ENCODE measurements at regions of chr10 and their contacts with region 1.

Region 1: DNA sequence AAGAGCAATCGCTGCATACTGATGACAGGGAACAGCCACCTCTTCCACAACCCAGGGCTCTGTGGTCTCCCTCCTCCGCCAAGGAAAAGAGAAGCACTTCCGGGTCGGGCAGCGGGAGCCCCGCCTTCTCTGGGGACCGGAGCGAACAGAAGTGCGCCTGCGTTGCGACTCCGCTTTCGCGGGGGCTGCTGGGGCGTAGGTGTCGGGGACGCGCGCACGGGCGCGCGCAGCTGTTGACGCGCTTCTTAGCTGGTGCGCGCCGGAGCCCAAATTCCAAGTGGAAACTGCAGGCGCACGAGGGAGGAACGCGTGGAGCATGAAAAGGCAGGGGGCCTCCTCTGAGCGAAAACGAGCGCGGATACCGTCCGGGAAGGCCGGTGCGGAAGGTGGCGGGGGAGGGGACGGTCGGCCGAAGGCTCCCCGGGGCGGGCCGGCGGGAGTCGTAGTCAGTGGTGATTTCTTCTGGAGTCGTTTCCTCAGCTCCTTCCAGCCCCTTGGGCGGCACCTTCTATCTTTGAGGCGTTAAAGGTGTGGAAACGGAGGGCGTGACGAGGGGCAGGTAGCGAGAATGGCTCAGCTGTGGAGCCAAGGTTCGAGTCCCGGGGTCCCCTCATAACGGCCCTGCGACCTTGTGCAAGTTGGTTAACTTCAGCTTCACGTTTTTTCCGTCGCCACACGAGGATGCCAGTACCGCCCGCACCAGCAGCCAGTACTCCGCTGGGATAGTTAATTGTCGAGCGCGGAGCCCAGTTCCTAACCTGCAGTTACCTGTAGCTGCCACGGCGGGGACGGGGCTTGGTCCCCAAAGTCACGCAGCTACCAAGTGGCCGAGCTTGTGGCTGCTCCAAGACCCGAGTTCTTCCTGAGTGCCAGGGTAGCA is at the starts of genes COX15 and CUTC:
- DNase-seq: peak; percentile 94 to 95 (median 95)
- H3K4me3 ChIP-seq: peak within 1 kb of the TSS; percentile 82 to 98
- H3K4me3 Mint-ChIP-seq: peak within 1 kb of the TSS; percentile 97 to 100 (median 100)
- H3K27ac ChIP-seq: peak within 1 kb of the TSS; percentile 91
- H3K27ac Mint-ChIP-seq: peak within 1 kb of the TSS; percentile 97 to 100 (median 99)
- H3K4me1 ChIP-seq: peaks cover 44% of the 10 kb centered on the region
- H3K4me1 Mint-ChIP-seq: peaks cover 22 to 56% (median 39%) of the 10 kb centered on the region in 4 donors
- H3K27me3 ChIP-seq: no peaks in the 10 kb centered on the region
- H3K27me3 Mint-ChIP-seq: no peaks in the 10 kb centered on the region
- total RNA-seq, gene COX15: 31.1 to 32.1 TPM
- total RNA-seq, gene CUTC: 29.8 to 35.8 TPM

Region 2: GRCh38 chr10:98134431-98135221 is 1597.6 kb before region 1 on chr10 and contains the start of gene R3HCC1L:
- CTCF ChIA-PET with region 1: no interaction called
- POLR2A ChIA-PET with region 1: no interaction called
- intact Hi-C with region 1: loop called (anchors 1 kb)
- DNase-seq: peak; percentile 89 to 95 (median 92)
- H3K4me3 ChIP-seq: peak within 1 kb of the TSS; percentile 83 to 84
- H3K4me3 Mint-ChIP-seq: peak within 1 kb of the TSS; percentile 77 to 93 (median 87)
- H3K27ac ChIP-seq: peak within 1 kb of the TSS; percentile 97
- H3K27ac Mint-ChIP-seq: peak within 1 kb of the TSS; percentile 89 to 98 (median 95)
- H3K4me1 ChIP-seq: peaks cover 43% of the 10 kb centered on the region
- H3K4me1 Mint-ChIP-seq: peaks cover 28 to 54% (median 43%) of the 10 kb centered on the region in 4 donors
- H3K27me3 ChIP-seq: no peaks in the 10 kb centered on the region
- H3K27me3 Mint-ChIP-seq: no peaks in the 10 kb centered on the region
- total RNA-seq, gene R3HCC1L: 27.2 to 30.4 TPM

Region 3: DNA sequence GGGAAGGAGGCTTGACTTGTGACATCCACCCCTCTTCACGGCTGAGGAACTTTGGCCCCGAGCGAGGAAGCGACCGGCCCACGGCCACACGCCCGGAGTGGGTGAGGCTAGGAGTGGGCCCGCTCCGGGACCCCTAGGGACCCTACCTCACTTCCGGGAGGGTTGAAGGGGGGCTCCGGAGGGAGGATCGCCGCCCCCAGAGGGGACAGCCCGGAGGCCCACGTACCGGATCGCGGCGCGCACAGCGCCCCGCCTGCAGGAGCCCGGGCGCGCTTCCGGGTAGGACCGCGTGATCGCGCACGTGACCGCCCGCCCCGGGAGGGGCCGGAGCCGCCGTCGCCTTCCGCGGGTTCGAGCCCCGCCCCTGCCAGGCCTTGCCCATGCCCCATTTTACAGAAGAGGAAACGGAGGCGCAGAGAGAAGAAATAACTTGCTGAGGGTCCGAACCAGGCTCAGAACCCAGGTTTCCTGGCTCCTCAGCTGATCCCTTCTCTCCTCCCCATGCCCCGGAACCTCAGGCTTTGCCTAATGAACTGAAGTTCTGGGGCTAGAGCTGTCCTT is 1285.5 kb before region 1 on chr10 and contains the start of gene HPS1:
- CTCF ChIA-PET with region 1: no interaction called
- POLR2A ChIA-PET with region 1: interaction called, 3 read pairs
- intact Hi-C with region 1: loop called (anchors 1 kb)
- DNase-seq: peak; percentile 64 to 78 (median 78)
- H3K4me3 ChIP-seq: peak within 1 kb of the TSS; percentile 73 to 84
- H3K4me3 Mint-ChIP-seq: peak within 1 kb of the TSS; percentile 88 to 95 (median 94)
- H3K27ac ChIP-seq: peak within 1 kb of the TSS; percentile 76
- H3K27ac Mint-ChIP-seq: peak within 1 kb of the TSS; percentile 89 to 95 (median 93)
- H3K4me1 ChIP-seq: peaks cover 41% of the 10 kb centered on the region
- H3K4me1 Mint-ChIP-seq: peaks cover 29 to 58% (median 42%) of the 10 kb centered on the region in 4 donors
- H3K27me3 ChIP-seq: no peaks in the 10 kb centered on the region
- H3K27me3 Mint-ChIP-seq: no peaks in the 10 kb centered on the region
- total RNA-seq, gene HPS1: 106 to 115 TPM

Region 4: DNA sequence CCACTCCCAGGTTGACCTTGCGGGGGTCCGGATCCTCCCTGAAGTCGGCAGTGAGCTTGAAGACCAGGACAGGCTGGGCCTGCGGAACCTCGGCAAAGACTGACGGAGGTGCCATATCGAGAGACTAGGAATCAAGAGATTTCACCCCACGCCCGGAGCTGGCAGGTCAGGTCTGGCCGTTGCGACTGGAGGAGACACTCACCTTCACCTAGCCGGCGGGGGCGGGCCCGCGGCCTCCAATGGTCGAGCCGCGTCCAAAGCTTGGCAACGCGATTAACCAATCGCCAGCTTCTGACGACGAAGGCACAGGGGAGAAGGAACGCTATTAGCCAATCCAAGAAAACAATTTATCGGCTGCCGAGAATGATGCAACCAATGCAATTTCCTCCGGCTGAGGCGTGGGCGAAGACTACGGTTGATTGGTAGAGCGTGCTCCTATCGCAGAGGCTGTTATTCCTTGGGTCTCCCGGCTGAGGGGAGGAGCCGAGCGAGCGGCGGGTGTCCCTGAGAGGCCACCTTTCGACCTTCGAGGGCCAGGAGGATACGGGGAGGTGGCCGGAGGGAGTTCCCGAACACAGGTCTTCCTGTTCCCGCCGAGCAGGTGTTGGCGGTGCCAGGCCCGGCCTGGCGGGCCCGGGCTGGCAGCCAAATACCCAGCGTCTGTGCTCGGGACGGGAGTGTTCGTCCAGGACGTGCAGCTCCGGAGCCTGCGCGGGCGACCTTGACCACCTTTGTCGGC is 301.7 kb before region 1 on chr10 and contains the start of gene GOT1:
- CTCF ChIA-PET with region 1: no interaction called
- POLR2A ChIA-PET with region 1: interaction called, 9 read pairs
- intact Hi-C with region 1: loop called (anchors 1 kb)
- DNase-seq: peak; percentile 93 to 97 (median 95)
- H3K4me3 ChIP-seq: peak within 1 kb of the TSS; percentile 88 to 96
- H3K4me3 Mint-ChIP-seq: peak within 1 kb of the TSS; percentile 96 to 99 (median 97)
- H3K27ac ChIP-seq: peak within 1 kb of the TSS; percentile 76
- H3K27ac Mint-ChIP-seq: peak within 1 kb of the TSS; percentile 91 to 99 (median 98)
- H3K4me1 ChIP-seq: peaks cover 21% of the 10 kb centered on the region
- H3K4me1 Mint-ChIP-seq: peaks cover 20 to 45% (median 34%) of the 10 kb centered on the region in 4 donors
- H3K27me3 ChIP-seq: no peaks in the 10 kb centered on the region
- H3K27me3 Mint-ChIP-seq: peaks cover 0 to 2% of the 10 kb centered on the region in 2 donors
- total RNA-seq, gene GOT1: 10.3 to 10.4 TPM

Region 5: GRCh38 chr10:99659031-99659867 is 73.0 kb before region 1 on chr10 and contains the start of gene ENTPD7:
- CTCF ChIA-PET with region 1: interaction called, 5 read pairs
- POLR2A ChIA-PET with region 1: interaction called, 19 read pairs
- intact Hi-C with region 1: loop called (anchors 2 kb)
- DNase-seq: peak; percentile 84 to 87 (median 85)
- H3K4me3 ChIP-seq: peak within 1 kb of the TSS; percentile 63 to 84
- H3K4me3 Mint-ChIP-seq: peak within 1 kb of the TSS; percentile 87 to 95 (median 91)
- H3K27ac ChIP-seq: peak within 1 kb of the TSS; percentile 66
- H3K27ac Mint-ChIP-seq: peak within 1 kb of the TSS; percentile 54 to 93 (median 84)
- H3K4me1 ChIP-seq: peaks cover 17% of the 10 kb centered on the region
- H3K4me1 Mint-ChIP-seq: peaks cover 16 to 27% (median 20%) of the 10 kb centered on the region in 4 donors
- H3K27me3 ChIP-seq: no peaks in the 10 kb centered on the region
- H3K27me3 Mint-ChIP-seq: peaks cover 7 to 19% of the 10 kb centered on the region in 2 donors
- total RNA-seq, gene ENTPD7: 3.7 to 3.9 TPM

Region 6: GRCh38 chr10:100009793-100010676 is 277.8 kb after region 1 on chr10 and contains the start of gene DNMBP:
- CTCF ChIA-PET with region 1: no interaction called
- POLR2A ChIA-PET with region 1: interaction called, 5 read pairs
- intact Hi-C with region 1: loop called (anchors 5 kb)
- DNase-seq: peak; percentile 75 to 81 (median 79)
- H3K4me3 ChIP-seq: peak within 1 kb of the TSS; percentile 65 to 89
- H3K4me3 Mint-ChIP-seq: peak within 1 kb of the TSS; percentile 89 to 97 (median 95)
- H3K27ac ChIP-seq: peak within 1 kb of the TSS; percentile 34
- H3K27ac Mint-ChIP-seq: peak within 1 kb of the TSS; percentile 76 to 93 (median 90)
- H3K4me1 ChIP-seq: peaks cover 19% of the 10 kb centered on the region
- H3K4me1 Mint-ChIP-seq: peaks cover 22 to 48% (median 31%) of the 10 kb centered on the region in 4 donors
- H3K27me3 ChIP-seq: no peaks in the 10 kb centered on the region
- H3K27me3 Mint-ChIP-seq: peaks cover 0 to 3% of the 10 kb centered on the region in 2 donors
- total RNA-seq, gene DNMBP: 3.8 to 4.0 TPM

Region 7: DNA sequence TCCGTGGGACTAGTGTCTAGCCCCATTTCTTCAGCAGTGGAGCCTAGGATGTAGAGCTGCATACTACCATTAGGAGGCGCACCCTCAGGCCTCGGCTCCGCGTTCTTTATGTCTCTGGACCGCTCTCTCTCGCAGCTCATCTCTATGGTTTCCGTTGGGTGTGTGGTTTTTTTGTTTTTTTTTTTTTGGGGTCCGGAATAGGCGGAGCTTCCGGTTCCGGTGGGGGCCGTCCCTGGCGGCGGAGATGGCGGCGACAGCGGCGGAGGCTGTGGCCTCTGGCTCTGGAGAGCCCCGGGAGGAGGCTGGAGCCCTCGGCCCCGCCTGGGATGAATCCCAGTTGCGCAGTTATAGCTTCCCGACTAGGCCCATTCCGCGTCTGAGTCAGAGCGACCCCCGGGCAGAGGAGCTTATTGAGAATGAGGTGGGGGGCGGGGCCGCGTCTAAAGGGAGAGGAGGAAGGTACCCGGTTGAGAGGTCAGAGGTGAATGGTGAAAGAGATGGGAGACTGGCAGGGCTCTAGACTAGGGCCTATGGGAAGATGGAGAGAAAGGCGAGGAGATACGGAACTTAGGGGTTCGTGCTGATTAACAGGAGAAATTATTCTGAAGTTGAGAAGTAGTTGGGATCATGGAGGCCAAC is 803.6 kb after region 1 on chr10 and contains the start of gene HIF1AN:
- CTCF ChIA-PET with region 1: interaction called, 3 read pairs
- POLR2A ChIA-PET with region 1: no interaction called
- intact Hi-C with region 1: loop called (anchors 10 kb)
- DNase-seq: peak; percentile 92 to 95 (median 94)
- H3K4me3 ChIP-seq: peak within 1 kb of the TSS; percentile 48 to 69
- H3K4me3 Mint-ChIP-seq: peak within 1 kb of the TSS in 1 of 8 donors; percentile 40
- H3K27ac ChIP-seq: peak within 1 kb of the TSS; percentile 77
- H3K27ac Mint-ChIP-seq: peak within 1 kb of the TSS in 3 of 7 donors; percentile 8 to 87 (median 32)
- H3K4me1 ChIP-seq: peaks cover 34% of the 10 kb centered on the region
- H3K4me1 Mint-ChIP-seq: peaks cover 12 to 23% (median 18%) of the 10 kb centered on the region in 4 donors
- H3K27me3 ChIP-seq: no peaks in the 10 kb centered on the region
- H3K27me3 Mint-ChIP-seq: no peaks in the 10 kb centered on the region
- total RNA-seq, gene HIF1AN: 69.6 to 69.8 TPM